ENCODE measurements at regions of chr6 and their contacts with region 1.

Region 1: DNA sequence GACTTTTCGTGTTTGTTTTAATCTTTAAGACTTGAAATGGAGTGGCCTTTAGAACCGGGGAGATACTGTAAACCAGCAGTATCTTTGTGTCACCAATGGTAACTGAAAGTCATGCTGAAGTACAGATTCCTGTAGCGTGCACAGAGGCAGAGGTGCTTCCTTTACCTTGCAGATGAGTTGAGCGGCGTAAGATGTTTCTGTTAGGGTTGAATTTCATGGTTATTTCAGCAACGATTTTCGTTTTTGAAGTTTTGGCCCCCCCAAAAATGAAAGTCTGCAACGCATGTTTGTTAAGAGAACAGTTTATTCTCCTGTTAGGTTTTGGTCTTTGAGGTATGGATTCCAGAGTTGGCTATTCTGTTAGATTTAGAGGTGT is 667 bp upstream of the ZBTB2 start:
- DNase-seq: peak in 2 of 3 donors; percentile 58 to 68
- H3K4me3 ChIP-seq: peak overlapping the region in 6 of 7 experiments; percentile 70 to 93 (median 84)
- H3K27ac ChIP-seq: peak overlapping the region; percentile 50 to 95
- H3K4me1 ChIP-seq: peaks cover 28 to 52% (median 39%) of the 10 kb centered on the region in 4 experiments
- H3K27me3 ChIP-seq: no peaks in the 10 kb centered on the region

Region 2: GRCh38 chr6:150959166-150959565 is 432.9 kb before region 1 on chr6:
- CTCF ChIA-PET with region 1: no interaction called
- POLR2A ChIA-PET with region 1: no interaction called
- DNase-seq: no peak
- H3K4me3 ChIP-seq: no peak overlapping the region
- H3K27ac ChIP-seq: no peak overlapping the region
- H3K4me1 ChIP-seq: no peaks in the 10 kb centered on the region
- H3K27me3 ChIP-seq: no peaks in the 10 kb centered on the region

Region 3: GRCh38 chr6:151269321-151269995 is 122.6 kb before region 1 on chr6:
- CTCF ChIA-PET with region 1: no interaction called
- POLR2A ChIA-PET with region 1: no interaction called
- DNase-seq: no peak
- H3K4me3 ChIP-seq: no peak overlapping the region
- H3K27ac ChIP-seq: no peak overlapping the region
- H3K4me1 ChIP-seq: no peaks in the 10 kb centered on the region
- H3K27me3 ChIP-seq: peaks cover 0 to 18% (median 9%) of the 10 kb centered on the region in 5 experiments

Region 4: DNA sequence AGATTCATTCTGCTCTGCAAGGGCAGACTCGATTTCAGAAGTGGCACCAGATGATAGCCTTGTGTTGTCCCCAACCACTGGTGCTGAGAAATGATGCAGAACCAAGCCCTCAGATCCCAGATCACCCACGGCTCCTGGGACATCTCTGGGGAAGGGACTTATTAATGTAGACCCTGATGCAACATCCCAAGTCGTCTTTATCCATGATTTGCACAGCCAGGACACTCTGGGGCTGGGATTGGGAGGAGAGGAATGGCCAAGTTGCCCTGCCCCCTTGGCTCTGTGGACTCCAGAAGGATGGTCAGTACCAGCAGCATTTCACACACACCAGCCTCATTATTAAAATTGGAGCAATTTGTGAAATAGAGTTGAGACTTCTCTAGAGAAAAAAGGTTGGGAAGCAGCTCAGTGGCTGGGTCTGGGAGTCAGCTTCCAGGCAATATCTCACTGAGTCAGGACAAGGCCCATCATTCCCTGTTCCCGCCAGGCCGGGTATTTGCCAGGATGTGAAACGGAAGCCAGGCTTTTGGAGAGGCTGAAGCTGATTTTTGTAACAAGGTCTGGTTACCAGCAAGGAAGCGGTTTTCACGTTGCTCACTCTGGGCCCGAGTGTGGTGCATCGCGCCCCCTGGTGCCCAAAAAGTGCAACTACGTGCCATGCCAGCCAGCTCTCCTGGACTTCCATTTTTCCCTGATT is 68.1 kb before region 1 on chr6:
- CTCF ChIA-PET with region 1: no interaction called
- POLR2A ChIA-PET with region 1: no interaction called
- DNase-seq: peak; percentile 47 to 71 (median 68)
- H3K4me3 ChIP-seq: peak overlapping the region in 1 of 7 experiments; percentile 42
- H3K27ac ChIP-seq: no peak overlapping the region
- H3K4me1 ChIP-seq: peaks cover 0 to 15% (median 7%) of the 10 kb centered on the region in 4 experiments
- H3K27me3 ChIP-seq: peaks cover 4 to 34% (median 13%) of the 10 kb centered on the region in 5 experiments

Region 5: DNA sequence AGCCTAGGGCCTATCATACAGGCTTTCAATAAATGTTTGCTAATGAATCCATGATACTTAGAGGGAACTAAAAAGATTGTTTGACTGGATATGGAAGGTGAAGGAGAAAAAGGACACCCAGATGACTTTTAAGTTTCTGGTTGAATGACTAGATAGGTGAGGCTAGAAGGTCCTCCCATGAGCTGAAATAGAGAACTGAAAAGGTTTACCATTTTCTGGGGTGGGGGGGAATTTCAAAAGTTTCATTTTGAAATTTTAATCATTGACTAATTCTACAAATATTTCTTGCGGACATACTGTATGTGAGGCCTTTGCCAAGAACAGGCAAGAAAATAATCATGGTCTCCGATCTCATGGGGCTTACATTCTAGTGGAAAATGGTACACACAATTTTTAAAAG is 17.2 kb after region 1 on chr6:
- CTCF ChIA-PET with region 1: interaction called, 36 read pairs
- POLR2A ChIA-PET with region 1: no interaction called
- DNase-seq: no peak
- H3K4me3 ChIP-seq: no peak overlapping the region
- H3K27ac ChIP-seq: no peak overlapping the region
- H3K4me1 ChIP-seq: no peaks in the 10 kb centered on the region
- H3K27me3 ChIP-seq: no peaks in the 10 kb centered on the region

Measured in common myeloid progenitor, CD34-positive (primary cell).